Heart left ventricle (tissue), 16 donors: ENCODE measurements at regions of chr6 and their contacts with region 1.

Region 1: DNA sequence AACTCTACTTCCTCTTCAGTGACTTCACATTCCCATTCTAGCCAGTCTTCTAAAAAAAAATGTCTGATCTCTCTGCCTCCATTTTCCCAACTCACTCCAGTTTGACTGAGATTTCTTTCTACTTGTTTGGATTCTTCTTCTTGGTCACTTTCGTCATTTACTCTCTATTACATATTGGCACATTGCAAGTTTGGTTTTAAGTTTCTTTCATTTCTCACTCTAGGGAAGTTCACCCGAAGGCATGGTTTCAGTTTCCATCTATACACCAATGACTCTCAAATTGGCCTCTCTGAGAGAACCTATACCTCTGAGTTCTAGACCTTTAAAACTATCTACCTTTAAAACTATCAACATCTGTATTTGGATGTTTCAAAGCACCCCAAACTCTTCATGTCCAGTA is 51.3 kb downstream of the CD109 start:
- DNase-seq: no peak
- ATAC-seq: no peak
- H3K4me3 ChIP-seq: peak overlapping the region in 2 of 12 donors; percentile 10 to 19
- H3K27ac ChIP-seq: peak overlapping the region in 1 of 12 donors; percentile 43
- H3K4me1 ChIP-seq: peaks cover 0 to 10% (median 0%) of the 10 kb centered on the region in 12 donors
- H3K27me3 ChIP-seq: no peaks in the 10 kb centered on the region
- CTCF ChIP-seq: no peak
- POLR2A ChIP-seq: no peak

Region 2: DNA sequence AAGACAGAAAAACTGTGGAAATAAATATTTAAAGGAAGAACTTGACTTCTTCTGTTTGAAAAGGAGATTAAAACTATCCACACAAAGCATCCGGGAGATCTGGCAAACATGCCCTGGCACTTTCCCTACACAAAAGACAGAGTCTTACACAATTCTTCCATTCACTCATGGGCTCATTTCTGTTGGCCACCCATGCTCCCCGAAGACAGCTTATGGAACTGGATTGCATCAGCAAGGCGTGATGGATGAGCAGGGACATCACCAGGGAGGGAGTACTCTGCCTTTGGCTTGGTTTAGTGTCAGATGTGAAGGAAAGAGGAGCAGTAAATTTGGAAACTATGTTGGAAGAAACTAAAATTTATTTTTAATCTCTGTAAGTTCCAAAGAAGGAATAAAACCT is 328.0 kb after region 1 on chr6:
- intact Hi-C with region 1: loop called in 2 of 10 experiments (anchors 10 kb)
- DNase-seq: peak in 4 of 5 donors; percentile 35 to 47 (median 42)
- ATAC-seq: peak in 3 of 4 donors; percentile 78 to 86 (median 82)
- H3K4me3 ChIP-seq: no peak overlapping the region
- H3K27ac ChIP-seq: peak overlapping the region in 6 of 12 donors; percentile 25 to 64 (median 47)
- H3K4me1 ChIP-seq: peaks cover 0 to 6% (median 0%) of the 10 kb centered on the region in 12 donors
- H3K27me3 ChIP-seq: no peaks in the 10 kb centered on the region
- CTCF ChIP-seq: no peak
- POLR2A ChIP-seq: no peak

Region 3: DNA sequence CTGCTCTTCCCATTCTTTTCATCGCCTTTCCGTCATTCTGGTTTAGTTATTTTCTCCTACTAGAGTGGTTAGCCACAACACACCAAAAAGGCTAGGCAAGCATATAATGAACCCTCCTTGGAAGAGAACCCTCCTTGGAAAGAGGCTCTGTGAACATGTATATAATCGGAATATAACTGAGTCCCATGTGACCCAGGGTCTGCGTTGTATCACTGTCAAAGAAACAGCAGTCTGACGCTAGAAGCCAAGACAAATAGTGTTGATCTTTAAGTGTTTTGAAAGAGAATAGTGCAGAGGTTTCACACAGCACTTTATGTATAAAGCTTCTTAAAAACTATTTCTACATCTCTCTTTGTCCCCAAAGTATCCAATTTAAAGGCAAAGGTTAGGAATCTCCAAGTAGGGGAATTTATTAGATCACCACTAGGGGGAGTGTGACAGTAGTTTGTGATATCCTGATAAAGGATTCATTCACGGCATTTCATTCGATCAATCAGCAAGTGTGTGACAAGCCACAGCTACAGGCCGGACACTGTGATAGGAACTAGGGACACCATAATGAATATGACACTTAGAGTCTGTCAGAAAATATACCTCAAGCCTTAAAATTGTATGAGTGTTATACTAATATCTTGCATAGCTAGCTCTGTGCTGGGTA is 344.0 kb after region 1 on chr6:
- intact Hi-C with region 1: loop called in 1 of 10 experiments (anchors 10 kb)
- DNase-seq: no peak
- ATAC-seq: peak in 3 of 4 donors; percentile 37 to 39 (median 39)
- H3K4me3 ChIP-seq: no peak overlapping the region
- H3K27ac ChIP-seq: peak overlapping the region in 4 of 12 donors; percentile 5 to 49 (median 8)
- H3K4me1 ChIP-seq: peaks cover 0 to 7% (median 0%) of the 10 kb centered on the region in 12 donors
- H3K27me3 ChIP-seq: no peaks in the 10 kb centered on the region
- CTCF ChIP-seq: peak; percentile 54 to 80 (median 68)
- POLR2A ChIP-seq: no peak